Endothelial cell of umbilical vein (primary cell): ENCODE measurements at regions of chr9 and their contacts with region 1.

Region 1: GRCh38 chr9:18393340-18394130 is 80.4 kb upstream of the ADAMTSL1 start:
- DNase-seq: peak; percentile 98
- H3K4me3 ChIP-seq: no peak overlapping the region
- H3K27ac ChIP-seq: peak overlapping the region; percentile 98
- H3K4me1 ChIP-seq: peaks cover 44% of the 10 kb centered on the region
- H3K27me3 ChIP-seq: no peaks in the 10 kb centered on the region
- CTCF ChIP-seq: no peak
- POLR2A ChIP-seq: no peak

Region 2: DNA sequence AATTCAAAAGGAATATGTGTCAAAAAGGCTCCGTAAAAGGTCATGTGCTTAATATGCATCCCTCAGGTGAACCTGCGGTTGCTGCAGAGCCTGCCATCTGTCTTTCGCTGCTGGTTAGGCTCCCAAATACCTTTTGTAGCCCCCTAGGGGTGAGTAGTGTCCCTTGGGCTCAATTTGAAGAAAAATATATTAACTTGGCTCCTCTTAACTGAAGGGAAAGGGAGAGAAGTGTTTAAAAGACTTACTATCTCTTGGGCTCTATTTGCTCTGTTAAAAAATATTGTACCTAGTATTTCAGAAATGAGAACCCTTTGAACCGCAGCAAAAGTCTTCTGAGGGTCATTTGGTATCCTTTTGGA is 96.0 kb before region 1 on chr9:
- CTCF ChIA-PET with region 1: interaction called, 4 read pairs
- POLR2A ChIA-PET with region 1: no interaction called
- dilution Hi-C with region 1: no loop called
- intact Hi-C with region 1: loop called (anchors 1 kb)
- DNase-seq: no peak
- H3K4me3 ChIP-seq: no peak overlapping the region
- H3K27ac ChIP-seq: peak overlapping the region; percentile 64
- H3K4me1 ChIP-seq: peaks cover 15% of the 10 kb centered on the region
- H3K27me3 ChIP-seq: no peaks in the 10 kb centered on the region
- CTCF ChIP-seq: peak; percentile 32 to 52
- POLR2A ChIP-seq: no peak

Region 3: DNA sequence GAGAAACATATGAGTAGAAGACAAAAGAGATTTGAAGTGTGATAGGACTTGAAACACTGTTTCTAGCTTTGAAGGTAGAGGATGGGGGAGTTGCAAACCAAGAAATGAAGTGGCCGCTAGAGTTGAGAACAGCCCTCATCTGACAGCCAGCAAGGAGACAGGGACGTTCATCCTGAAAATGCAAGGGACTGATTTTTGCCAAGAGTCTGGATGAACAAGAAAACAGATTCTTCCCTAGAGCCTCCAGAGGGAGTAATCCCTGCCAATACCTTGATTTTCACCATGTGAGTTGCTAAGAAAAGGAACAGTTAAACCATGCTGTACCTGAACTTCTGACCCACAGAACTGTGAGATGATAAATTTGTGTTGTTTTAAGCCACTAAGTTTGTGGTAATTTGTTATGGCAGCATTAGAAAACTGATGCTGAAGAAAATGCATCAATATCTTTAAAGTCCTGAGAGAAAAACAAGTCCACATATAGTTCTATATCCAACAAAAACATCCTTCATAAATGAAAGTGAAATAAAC is 73.6 kb before region 1 on chr9:
- CTCF ChIA-PET with region 1: interaction called, 10 read pairs
- POLR2A ChIA-PET with region 1: no interaction called
- dilution Hi-C with region 1: no loop called
- intact Hi-C with region 1: no loop called
- DNase-seq: peak; percentile 71
- H3K4me3 ChIP-seq: no peak overlapping the region
- H3K27ac ChIP-seq: no peak overlapping the region
- H3K4me1 ChIP-seq: no peaks in the 10 kb centered on the region
- H3K27me3 ChIP-seq: no peaks in the 10 kb centered on the region
- CTCF ChIP-seq: peak in 1 of 2 donors; percentile 16
- POLR2A ChIP-seq: no peak

Region 4: DNA sequence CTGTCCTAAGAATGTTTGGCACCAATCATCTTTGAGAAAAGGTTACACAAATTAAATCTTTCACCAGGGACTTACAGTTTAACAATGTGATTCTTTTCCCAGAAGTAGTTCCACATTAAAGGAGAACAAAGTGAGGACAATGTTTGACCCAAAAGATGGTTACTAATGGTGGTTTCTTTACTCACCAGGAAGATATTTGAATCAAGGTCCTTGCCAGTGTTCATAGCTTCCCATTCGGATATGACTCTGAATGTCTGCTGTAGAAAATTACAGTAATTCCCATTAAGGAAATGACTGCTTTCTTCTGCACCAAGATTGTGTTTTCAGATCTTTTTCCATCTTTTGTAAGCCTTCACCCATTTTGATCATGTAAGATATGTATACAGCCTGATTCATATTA is 34.2 kb before region 1 on chr9:
- CTCF ChIA-PET with region 1: no interaction called
- POLR2A ChIA-PET with region 1: no interaction called
- dilution Hi-C with region 1: no loop called
- intact Hi-C with region 1: loop called (anchors 1 kb)
- DNase-seq: peak; percentile 92
- H3K4me3 ChIP-seq: peak overlapping the region in 1 of 3 experiments; percentile 59
- H3K27ac ChIP-seq: peak overlapping the region; percentile 100
- H3K4me1 ChIP-seq: peaks cover 31% of the 10 kb centered on the region
- H3K27me3 ChIP-seq: no peaks in the 10 kb centered on the region
- CTCF ChIP-seq: no peak
- POLR2A ChIP-seq: no peak

Region 5: DNA sequence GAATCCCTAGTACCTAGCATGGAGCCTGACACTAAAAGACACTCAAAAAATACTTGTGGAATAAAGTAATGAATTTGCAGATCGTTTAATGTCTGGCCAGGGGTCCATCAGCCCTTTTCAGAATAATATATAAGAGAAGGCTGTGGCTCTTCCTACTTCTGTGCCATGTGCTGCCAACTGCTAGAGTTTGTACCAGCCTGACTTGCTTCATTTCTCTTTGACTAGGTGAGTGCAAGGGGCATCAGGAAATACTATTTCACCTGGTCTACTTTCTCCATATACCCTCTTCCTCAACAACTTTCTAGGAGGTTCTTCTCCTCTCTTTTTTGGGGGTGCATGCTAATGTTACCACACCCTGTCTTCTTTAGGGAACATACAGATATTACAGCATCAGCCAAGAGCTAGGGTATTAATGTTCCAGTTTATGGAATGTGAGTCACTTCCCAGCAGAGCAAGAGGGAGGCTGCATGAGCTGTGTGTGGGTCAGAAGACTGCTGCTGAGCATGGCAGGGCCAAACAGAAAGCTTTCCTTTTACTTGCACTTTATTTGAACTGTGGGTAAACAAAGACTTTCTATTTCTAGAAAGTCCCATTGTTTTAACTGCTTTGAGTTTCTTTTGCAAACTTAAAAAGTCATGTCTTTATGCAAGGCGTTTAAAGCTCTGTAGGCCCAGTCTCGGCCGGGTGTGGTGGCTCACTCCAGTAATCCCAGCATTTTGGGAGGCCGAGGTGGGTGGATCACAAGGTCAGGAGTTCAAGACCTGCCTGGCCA is 239.3 kb after region 1 on chr9:
- CTCF ChIA-PET with region 1: no interaction called
- POLR2A ChIA-PET with region 1: no interaction called
- dilution Hi-C with region 1: no loop called
- intact Hi-C with region 1: loop called (anchors 5 kb)
- DNase-seq: peak; percentile 96
- H3K4me3 ChIP-seq: no peak overlapping the region
- H3K27ac ChIP-seq: peak overlapping the region; percentile 81
- H3K4me1 ChIP-seq: peaks cover 39% of the 10 kb centered on the region
- H3K27me3 ChIP-seq: no peaks in the 10 kb centered on the region
- CTCF ChIP-seq: no peak
- POLR2A ChIP-seq: no peak